ENCODE measurements at regions of chr2 and their contacts with region 1.

Region 1: DNA sequence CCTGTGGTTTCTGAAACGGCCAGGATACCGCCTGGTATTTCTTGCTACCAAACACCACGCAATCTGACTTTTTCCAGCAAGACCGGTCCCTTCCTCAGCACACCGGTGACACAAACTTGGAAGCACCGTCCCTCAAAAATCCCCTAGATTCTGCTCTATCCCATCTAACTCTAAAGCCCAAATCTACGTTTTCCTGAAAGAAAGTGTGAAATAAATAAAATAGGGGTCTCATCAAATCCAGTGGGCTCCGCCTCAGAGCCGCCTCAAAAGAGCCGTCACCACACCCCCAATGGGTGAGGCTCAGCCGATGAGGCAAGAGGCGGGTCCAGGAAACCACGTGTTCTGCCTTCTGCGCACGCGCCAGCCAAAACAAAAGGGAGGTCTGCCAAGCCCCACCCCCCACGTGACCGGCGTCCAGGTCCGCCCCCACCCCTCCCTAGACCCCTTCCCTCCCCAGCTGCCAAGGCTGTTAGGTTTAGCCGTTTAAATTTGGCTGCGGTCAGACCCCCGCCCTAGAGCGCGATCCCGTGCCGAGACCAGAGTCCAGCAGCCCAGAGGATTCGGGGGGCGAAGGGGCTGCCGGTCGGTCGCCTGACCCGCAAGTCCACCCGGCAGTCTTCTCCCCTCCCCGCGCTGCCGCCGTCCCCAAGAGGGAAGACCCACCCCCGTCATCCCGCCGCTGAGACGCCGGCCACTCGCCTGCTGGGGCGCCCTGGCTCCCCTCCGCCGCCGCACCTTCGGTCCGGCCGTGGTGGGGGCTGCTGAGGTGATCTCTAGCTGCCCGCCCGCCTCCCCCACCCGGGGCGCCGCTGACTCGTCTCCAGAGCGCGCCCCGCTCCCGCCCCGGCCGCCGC is 532 bp downstream of the KANSL1L start:
- H3K4me3 Mint-ChIP-seq: peak overlapping the region; percentile 97
- H3K27ac Mint-ChIP-seq: peak overlapping the region; percentile 99
- H3K4me1 Mint-ChIP-seq: peaks cover 19% of the 10 kb centered on the region
- H3K27me3 Mint-ChIP-seq: peaks cover 7% of the 10 kb centered on the region

Region 2: DNA sequence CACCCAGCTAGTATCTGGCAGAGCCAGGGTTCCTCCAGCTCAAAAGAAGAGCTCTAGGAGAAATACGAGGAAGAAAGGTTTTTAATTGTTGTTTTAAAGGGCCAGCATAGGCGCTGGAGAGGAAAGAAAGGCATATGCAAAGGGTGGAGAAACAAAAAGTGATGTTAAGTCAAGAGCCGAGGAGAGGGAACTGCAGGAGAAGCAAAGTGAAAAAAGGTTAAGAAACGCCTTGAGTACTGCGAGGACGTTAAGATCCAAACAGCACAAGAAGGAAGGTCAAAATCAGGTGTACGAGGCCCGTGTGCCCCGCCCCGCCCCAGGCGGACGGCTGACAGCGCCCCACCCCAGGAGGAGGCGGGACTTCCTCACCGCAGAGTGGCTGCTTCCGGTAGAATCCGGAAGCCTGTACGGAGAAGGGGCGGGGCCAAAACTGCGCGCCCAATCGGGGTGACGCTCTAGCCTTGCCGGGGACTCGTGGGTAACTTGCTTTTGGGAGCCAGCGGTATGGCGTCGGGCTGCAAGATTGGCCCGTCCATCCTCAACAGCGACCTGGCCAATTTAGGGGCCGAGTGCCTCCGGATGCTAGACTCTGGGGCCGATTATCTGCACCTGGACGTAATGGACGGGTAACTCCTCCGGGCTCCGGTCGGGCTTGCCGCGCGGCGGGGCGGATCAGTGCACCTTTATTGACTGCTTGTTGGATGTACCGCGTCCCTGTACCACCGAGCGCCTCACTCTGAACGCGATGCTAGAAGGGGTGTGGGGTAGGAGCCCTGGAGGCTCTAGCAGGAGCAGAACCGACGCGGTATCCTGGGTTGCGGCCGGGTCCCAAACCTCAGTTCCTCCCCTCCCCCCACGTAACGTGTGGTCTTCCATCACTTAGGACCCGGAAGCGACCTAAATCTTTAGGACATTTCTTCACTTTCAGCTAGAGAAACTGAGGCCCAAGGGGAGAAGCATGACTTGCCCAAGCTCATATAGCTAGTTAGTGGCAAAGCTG is 168.2 kb before region 1 on chr2 and contains the start of gene RPE:
- intact Hi-C with region 1: loop called (anchors 1 kb)
- H3K4me3 Mint-ChIP-seq: peak within 1 kb of the TSS; percentile 96
- H3K27ac Mint-ChIP-seq: peak within 1 kb of the TSS; percentile 93
- H3K4me1 Mint-ChIP-seq: peaks cover 52% of the 10 kb centered on the region
- H3K27me3 Mint-ChIP-seq: no peaks in the 10 kb centered on the region

Region 3: GRCh38 chr2:210215120-210215519 is 44.4 kb after region 1 on chr2:
- intact Hi-C with region 1: no loop called
- H3K4me3 Mint-ChIP-seq: no peak overlapping the region
- H3K27ac Mint-ChIP-seq: no peak overlapping the region
- H3K4me1 Mint-ChIP-seq: no peaks in the 10 kb centered on the region
- H3K27me3 Mint-ChIP-seq: peaks cover 6% of the 10 kb centered on the region